ENCODE measurements at regions of chr12 and their contacts with region 1.

Region 1: DNA sequence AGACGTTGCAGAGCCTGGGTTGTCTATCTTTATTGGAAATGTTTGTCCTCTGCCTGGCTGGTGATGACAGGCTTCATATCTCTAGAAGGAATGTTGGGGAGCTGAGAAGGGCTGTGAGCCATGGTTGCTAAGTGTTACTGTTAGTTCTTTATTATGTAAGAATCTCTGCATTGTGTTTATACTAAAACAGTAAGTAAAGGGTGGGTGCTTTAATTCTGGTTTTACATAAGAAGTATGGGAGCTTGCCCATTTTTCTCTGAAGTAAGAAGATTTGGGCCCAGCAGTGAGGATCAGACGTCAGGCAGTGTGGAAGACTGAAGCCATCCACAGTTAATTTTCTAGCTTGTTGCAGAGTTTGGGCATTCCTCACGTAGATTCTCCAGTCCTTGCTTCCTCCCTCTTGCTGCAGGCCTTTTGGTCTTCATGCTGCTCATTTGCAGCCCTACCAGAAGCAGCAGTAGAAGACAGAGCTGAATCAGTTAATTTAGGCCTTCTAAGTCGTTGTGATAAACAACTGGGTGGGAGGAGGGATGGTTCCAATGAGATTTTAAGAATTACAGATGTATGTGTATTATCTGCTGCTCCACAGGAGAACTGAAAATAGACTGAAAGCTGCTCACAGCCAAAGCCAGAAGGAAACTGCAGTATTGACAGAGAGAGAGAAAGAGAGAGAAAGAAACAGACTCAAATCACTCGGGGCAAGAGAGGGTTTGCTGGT is 21.4 kb downstream of the WNT5B start:
- DNase-seq: no peak
- ATAC-seq: no peak
- H3K4me3 ChIP-seq: no peak overlapping the region
- H3K27ac ChIP-seq: no peak overlapping the region
- H3K4me1 ChIP-seq: no peaks in the 10 kb centered on the region
- CTCF ChIP-seq: no peak
- EP300 ChIP-seq: no peak
- POLR2A ChIP-seq: no peak
- RAD21 ChIP-seq: no peak

Region 2: GRCh38 chr12:1668833-1669543 is 18.6 kb after region 1 on chr12:
- CTCF ChIA-PET with region 1: interaction called, 13 read pairs
- POLR2A ChIA-PET with region 1: interaction called, 3 read pairs
- DNase-seq: no peak
- ATAC-seq: peak in 1 of 2 experiments; percentile 36; a peak in 2 of 6 replicates
- H3K4me3 ChIP-seq: no peak overlapping the region
- H3K27ac ChIP-seq: no peak overlapping the region
- H3K4me1 ChIP-seq: peaks cover 9% of the 10 kb centered on the region; the same call in 2 of the 3 replicates
- CTCF ChIP-seq: no peak
- EP300 ChIP-seq: no peak
- POLR2A ChIP-seq: no peak
- RAD21 ChIP-seq: no peak

Region 3: GRCh38 chr12:1690578-1691122 is 40.2 kb after region 1 on chr12 and contains the start of gene ADIPOR2:
- CTCF ChIA-PET with region 1: interaction called, 29 read pairs
- POLR2A ChIA-PET with region 1: no interaction called
- DNase-seq: peak; percentile 96 to 98
- ATAC-seq: peak; percentile 98 to 99
- H3K4me3 ChIP-seq: peak within 1 kb of the TSS; percentile 97
- H3K27ac ChIP-seq: peak within 1 kb of the TSS; percentile 95
- H3K4me1 ChIP-seq: peaks cover 19% of the 10 kb centered on the region
- CTCF ChIP-seq: no peak
- EP300 ChIP-seq: no peak
- POLR2A ChIP-seq: peak; percentile 86
- RAD21 ChIP-seq: no peak; a peak in 1 of 5 replicates
- polyA plus RNA-seq, gene ADIPOR2: 65.4 and 80.0 TPM in 2 replicates

Region 4: DNA sequence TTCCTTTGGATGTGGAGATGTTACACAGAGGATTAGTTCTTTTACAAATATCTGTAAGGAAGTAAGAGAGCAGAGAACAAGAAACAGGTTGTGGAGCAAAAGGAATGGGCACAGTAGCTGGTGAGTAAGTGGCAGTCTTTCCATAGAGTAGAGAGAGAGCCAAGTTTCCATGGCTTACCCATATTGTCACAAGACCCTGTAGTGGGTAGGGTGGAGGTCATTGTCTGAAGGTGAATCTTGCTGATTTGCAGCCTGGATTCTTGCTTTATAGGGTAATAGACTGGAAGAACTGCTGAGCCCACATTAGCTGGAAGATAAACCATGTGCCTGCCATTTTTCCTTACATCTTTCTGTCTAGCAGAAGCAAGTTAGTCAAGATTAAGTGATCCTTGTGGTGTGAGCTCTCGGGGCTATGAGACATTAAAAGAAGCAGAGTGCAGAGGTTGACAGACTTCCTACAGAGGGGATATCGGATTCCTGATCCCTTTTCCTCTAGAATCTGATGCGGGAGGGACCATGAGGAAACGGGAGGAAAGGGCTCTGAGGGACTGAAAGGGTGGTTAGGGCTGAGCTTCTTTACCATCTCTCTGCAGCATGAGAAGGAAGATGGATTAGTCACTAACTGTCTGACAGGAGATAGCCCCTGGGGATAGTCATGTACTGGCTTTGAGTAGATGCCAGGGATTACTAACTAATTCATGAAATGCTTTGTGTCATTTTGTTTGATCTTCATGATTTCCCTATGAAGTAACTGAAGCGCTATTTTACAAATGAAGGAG is 125.9 kb after region 1 on chr12:
- CTCF ChIA-PET with region 1: interaction called, 68 read pairs
- POLR2A ChIA-PET with region 1: no interaction called
- DNase-seq: peak; percentile 48 to 65
- ATAC-seq: peak; percentile 87 to 93; a peak in 5 of 6 replicates
- H3K4me3 ChIP-seq: no peak overlapping the region
- H3K27ac ChIP-seq: peak overlapping the region; percentile 37 to 67; a peak in 5 of 6 replicates
- H3K4me1 ChIP-seq: peaks cover 32% of the 10 kb centered on the region
- CTCF ChIP-seq: no peak
- EP300 ChIP-seq: no peak
- POLR2A ChIP-seq: no peak
- RAD21 ChIP-seq: no peak